Body of pancreas (tissue), 4 donors: ENCODE measurements at regions of chr6 and their contacts with region 1.

Region 1: DNA sequence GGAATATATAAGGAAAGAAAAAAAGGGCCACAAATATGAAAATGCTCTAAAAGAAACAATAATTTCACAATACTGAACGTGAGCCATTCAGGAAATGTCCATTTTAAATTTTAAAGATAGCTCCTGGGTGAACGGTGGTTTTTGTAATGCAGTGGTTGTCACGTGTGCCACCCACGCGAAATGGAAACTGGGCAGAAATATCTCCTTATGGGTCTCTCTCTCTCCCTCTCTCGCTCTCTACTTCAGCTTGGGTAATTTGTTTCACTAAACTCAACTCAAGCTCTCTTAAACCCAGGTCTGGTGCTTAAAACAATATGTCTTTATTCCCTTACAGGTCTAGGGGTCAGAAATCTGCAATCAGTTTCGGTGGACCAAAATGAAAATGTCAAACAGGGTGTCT is 150.8 kb downstream of the OR2B2 start:
- DNase-seq: no peak
- ATAC-seq: no peak
- H3K4me3 ChIP-seq: no peak overlapping the region
- H3K27ac ChIP-seq: no peak overlapping the region
- H3K4me1 ChIP-seq: no peaks in the 10 kb centered on the region
- H3K27me3 ChIP-seq: peaks cover 0 to 5% of the 10 kb centered on the region in 2 donors
- CTCF ChIP-seq: no peak
- POLR2A ChIP-seq: no peak

Region 2: GRCh38 chr6:27528714-27529113 is 232.7 kb before region 1 on chr6:
- intact Hi-C with region 1: loop called (anchors 10 kb)
- DNase-seq: no peak
- ATAC-seq: no peak
- H3K4me3 ChIP-seq: no peak overlapping the region
- H3K27ac ChIP-seq: no peak overlapping the region
- H3K4me1 ChIP-seq: no peaks in the 10 kb centered on the region
- H3K27me3 ChIP-seq: no peaks in the 10 kb centered on the region
- CTCF ChIP-seq: no peak
- POLR2A ChIP-seq: no peak